HepG2 (cell line): ENCODE measurements at regions of chr3 and their contacts with region 1.

Region 1: GRCh38 chr3:72847751-72848702 is at the start of gene SHQ1:
- DNase-seq: peak; percentile 91
- ATAC-seq: peak; percentile 97
- H3K4me3 ChIP-seq: peak within 1 kb of the TSS; percentile 76 to 97 (median 91)
- H3K27ac ChIP-seq: peak within 1 kb of the TSS; percentile 57
- H3K4me1 ChIP-seq: peaks cover 45% of the 10 kb centered on the region
- H3K27me3 ChIP-seq: no peaks in the 10 kb centered on the region; a peak in 1 of 5 replicates
- CTCF ChIP-seq: no peak
- EP300 ChIP-seq: no peak
- POLR2A ChIP-seq: peak; percentile 36 to 88; a peak in 3 of 4 replicates
- RAD21 ChIP-seq: 0 out of 2 replicates have a peak, but pooled peaks have one; percentile 12
- total RNA-seq, gene SHQ1: 20.3 and 25.6 TPM in 2 replicates

Region 2: GRCh38 chr3:72641684-72642083 is 206.3 kb before region 1 on chr3:
- CTCF ChIA-PET with region 1: no interaction called
- POLR2A ChIA-PET with region 1: no interaction called
- in situ Hi-C with region 1: no loop called
- intact Hi-C with region 1: no loop called
- DNase-seq: no peak
- ATAC-seq: no peak
- H3K4me3 ChIP-seq: no peak overlapping the region
- H3K27ac ChIP-seq: no peak overlapping the region
- H3K4me1 ChIP-seq: no peaks in the 10 kb centered on the region
- H3K27me3 ChIP-seq: no peaks in the 10 kb centered on the region; a peak in 1 of 5 replicates
- CTCF ChIP-seq: no peak
- EP300 ChIP-seq: no peak
- POLR2A ChIP-seq: no peak
- RAD21 ChIP-seq: no peak

Region 3: DNA sequence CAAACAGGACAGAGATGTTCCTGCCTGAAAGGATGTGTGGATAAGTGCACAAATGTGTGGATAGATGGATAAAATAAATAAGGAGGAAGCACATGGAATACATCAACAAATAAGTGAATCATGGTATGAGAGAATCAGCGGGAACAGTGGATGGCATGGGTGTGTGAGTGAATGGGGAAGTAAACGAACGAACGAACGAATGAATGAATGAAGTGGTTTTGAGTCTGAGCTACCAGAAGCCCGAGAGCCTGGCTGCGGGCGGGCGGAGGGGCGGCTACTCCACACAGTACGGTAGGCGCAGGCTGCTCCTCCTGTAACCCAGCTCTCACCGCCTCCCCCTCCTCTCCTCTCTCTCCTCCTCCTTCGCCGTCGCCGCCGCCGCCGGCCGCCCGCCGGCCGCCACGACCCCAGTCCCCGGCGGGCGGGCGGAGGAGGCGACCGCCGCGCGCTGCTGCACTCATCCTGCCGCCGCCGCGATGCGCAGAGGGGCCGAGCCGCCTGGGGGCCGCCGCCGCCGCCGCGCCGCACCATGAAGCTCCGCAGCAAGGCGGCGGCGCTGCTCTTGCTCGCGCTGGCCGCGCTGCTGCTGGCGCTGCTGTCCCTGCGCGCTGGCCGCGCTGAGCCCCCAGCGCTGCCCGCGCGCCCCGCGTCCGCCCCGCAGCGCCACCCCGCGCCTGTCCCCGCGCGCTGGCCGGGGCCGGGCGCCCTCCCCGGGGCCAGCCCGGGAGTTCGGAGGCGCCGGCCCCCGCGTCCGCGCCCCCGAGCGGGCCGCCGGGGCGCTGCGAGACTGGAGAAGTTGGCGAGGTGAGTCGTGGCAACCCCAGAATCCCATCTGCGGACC is 39.9 kb after region 1 on chr3 and contains the start of gene GXYLT2:
- CTCF ChIA-PET with region 1: no interaction called
- POLR2A ChIA-PET with region 1: no interaction called
- in situ Hi-C with region 1: no loop called
- intact Hi-C with region 1: loop called (anchors 5 kb)
- DNase-seq: peak; percentile 48
- ATAC-seq: peak; percentile 78
- H3K4me3 ChIP-seq: peak within 1 kb of the TSS; percentile 70 to 90 (median 75)
- H3K27ac ChIP-seq: peak within 1 kb of the TSS; percentile 50
- H3K4me1 ChIP-seq: peaks cover 63% of the 10 kb centered on the region
- H3K27me3 ChIP-seq: no peaks in the 10 kb centered on the region; a peak in 1 of 5 replicates
- CTCF ChIP-seq: 0 out of 2 replicates have a peak, but pooled peaks have one; percentile 4
- EP300 ChIP-seq: no peak
- POLR2A ChIP-seq: no peak; a peak in 1 of 4 replicates
- RAD21 ChIP-seq: no peak; the same call in 1 of the 2 replicates
- total RNA-seq, gene GXYLT2: 6.9 and 7.4 TPM in 2 replicates

Region 4: GRCh38 chr3:72938471-72939265 is 90.6 kb after region 1 on chr3:
- CTCF ChIA-PET with region 1: no interaction called
- POLR2A ChIA-PET with region 1: no interaction called
- in situ Hi-C with region 1: no loop called
- intact Hi-C with region 1: loop called (anchors 2 kb)
- DNase-seq: peak; percentile 81
- ATAC-seq: peak; percentile 98
- H3K4me3 ChIP-seq: peak overlapping the region; percentile 31 to 41 (median 36); a peak in 4 of 6 replicates
- H3K27ac ChIP-seq: peak overlapping the region; percentile 58
- H3K4me1 ChIP-seq: peaks cover 16% of the 10 kb centered on the region
- H3K27me3 ChIP-seq: no peaks in the 10 kb centered on the region
- CTCF ChIP-seq: peak; percentile 60
- EP300 ChIP-seq: peak in 1 of 2 experiments; percentile 57; a peak in 1 of 4 replicates
- POLR2A ChIP-seq: no peak
- RAD21 ChIP-seq: peak; percentile 62

Region 5: DNA sequence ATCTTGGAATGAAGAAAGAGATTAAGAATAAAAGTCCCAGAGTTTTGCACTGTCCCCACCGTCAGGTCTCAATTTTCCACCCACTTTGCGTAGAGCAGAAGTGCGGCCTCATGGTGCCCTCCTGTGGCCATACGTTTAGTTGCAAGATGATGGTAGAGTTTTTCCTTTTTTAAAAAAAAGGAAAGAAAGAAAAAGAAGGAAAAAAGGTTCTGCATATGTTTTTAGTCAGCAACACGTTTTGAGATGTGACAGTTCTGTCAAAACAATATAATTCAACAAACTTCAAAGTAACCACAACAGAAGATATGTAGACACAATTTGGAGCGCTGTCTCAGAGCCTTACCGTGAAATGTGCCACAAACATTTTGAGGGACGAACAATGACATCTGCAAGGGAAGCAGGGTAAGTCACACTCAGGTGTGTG is 238.1 kb after region 1 on chr3:
- CTCF ChIA-PET with region 1: interaction called, 40 read pairs
- POLR2A ChIA-PET with region 1: no interaction called
- in situ Hi-C with region 1: loop called (anchors 10 kb)
- intact Hi-C with region 1: loop called (anchors 1 kb)
- DNase-seq: peak; percentile 34
- ATAC-seq: peak; percentile 68
- H3K4me3 ChIP-seq: no peak overlapping the region
- H3K27ac ChIP-seq: no peak overlapping the region
- H3K4me1 ChIP-seq: no peaks in the 10 kb centered on the region
- H3K27me3 ChIP-seq: no peaks in the 10 kb centered on the region; a peak in 1 of 5 replicates
- CTCF ChIP-seq: peak; percentile 81
- EP300 ChIP-seq: no peak
- POLR2A ChIP-seq: no peak
- RAD21 ChIP-seq: peak; percentile 81